ENCODE measurements at regions of chr1 and their contacts with region 1.

Region 1: GRCh38 chr1:108897865-108898720 is 21.3 kb downstream of the GPSM2 start:
- DNase-seq: peak; percentile 84
- H3K4me3 Mint-ChIP-seq: no peak overlapping the region
- H3K27ac Mint-ChIP-seq: no peak overlapping the region
- H3K4me1 Mint-ChIP-seq: peaks cover 2% of the 10 kb centered on the region
- H3K27me3 Mint-ChIP-seq: no peaks in the 10 kb centered on the region

Region 2: GRCh38 chr1:108828022-108828961 is 69.8 kb before region 1 on chr1:
- intact Hi-C with region 1: loop called (anchors 1 kb)
- DNase-seq: peak; percentile 90
- H3K4me3 Mint-ChIP-seq: no peak overlapping the region
- H3K27ac Mint-ChIP-seq: no peak overlapping the region
- H3K4me1 Mint-ChIP-seq: peaks cover 7% of the 10 kb centered on the region
- H3K27me3 Mint-ChIP-seq: peaks cover 6% of the 10 kb centered on the region

Region 3: GRCh38 chr1:108877348-108878159 is 20.5 kb before region 1 on chr1:
- intact Hi-C with region 1: no loop called
- DNase-seq: peak; percentile 65
- H3K4me3 Mint-ChIP-seq: peak overlapping the region; percentile 93
- H3K27ac Mint-ChIP-seq: peak overlapping the region; percentile 54
- H3K4me1 Mint-ChIP-seq: peaks cover 23% of the 10 kb centered on the region
- H3K27me3 Mint-ChIP-seq: peaks cover 17% of the 10 kb centered on the region

Measured in activated CD4-positive, alpha-beta T cell treated with anti-CD3 and anti-CD28 coated beads, Interleukin-2, amount 10 ng/mL, durations not matched to agents 24 days and 14 days (primary cell).